ENCODE measurements at regions of chr10 and their contacts with region 1.

Region 1: DNA sequence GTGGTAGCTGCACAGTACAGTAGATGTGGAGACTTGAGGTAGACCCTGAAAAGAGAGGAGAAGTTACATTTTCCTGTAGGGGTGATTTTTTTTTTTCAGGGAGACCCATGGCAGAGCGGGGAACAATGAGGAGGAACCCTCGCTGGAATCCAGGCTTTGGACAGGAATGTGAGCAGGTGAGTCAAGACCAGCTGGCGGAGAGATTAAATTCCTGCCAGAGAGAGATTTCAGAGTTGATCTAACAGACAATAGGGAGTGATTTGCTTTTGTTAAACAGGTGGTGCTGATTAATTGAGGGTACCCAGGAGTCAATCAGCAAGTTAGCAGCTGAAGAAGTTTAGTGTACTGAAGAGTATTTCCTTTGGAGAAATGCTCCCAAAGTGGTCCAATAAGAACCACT is 41.6 kb upstream of the MINDY3 start:
- DNase-seq: no peak
- ATAC-seq: no peak
- H3K4me3 ChIP-seq: no peak overlapping the region
- H3K4me1 ChIP-seq: no peaks in the 10 kb centered on the region
- CTCF ChIP-seq: no peak

Region 2: GRCh38 chr10:16777473-16778370 is 875.8 kb after region 1 on chr10:
- intact Hi-C with region 1: loop called (anchors 5 to 10 kb)
- DNase-seq: peak in 1 of 3 donors; percentile 20
- ATAC-seq: peak; percentile 88
- H3K4me3 ChIP-seq: no peak overlapping the region
- H3K4me1 ChIP-seq: peaks cover 3% of the 10 kb centered on the region
- CTCF ChIP-seq: peak; percentile 38